Right ventricle myocardium superior (tissue), 1 donor: ENCODE measurements at regions of chr2 and their contacts with region 1.

Region 1: GRCh38 chr2:239311132-239312040 is 89.4 kb downstream of the HDAC4 start:
- DNase-seq: peak; percentile 70
- ATAC-seq: peak; percentile 52

Region 2: GRCh38 chr2:239239607-239240413 is 71.6 kb before region 1 on chr2:
- intact Hi-C with region 1: no loop called
- DNase-seq: peak; percentile 73
- ATAC-seq: peak; percentile 71

Region 3: GRCh38 chr2:239393388-239394340 is 82.3 kb after region 1 on chr2:
- intact Hi-C with region 1: loop called (anchors 5 kb)
- DNase-seq: peak; percentile 88
- ATAC-seq: peak; percentile 25

Region 4: DNA sequence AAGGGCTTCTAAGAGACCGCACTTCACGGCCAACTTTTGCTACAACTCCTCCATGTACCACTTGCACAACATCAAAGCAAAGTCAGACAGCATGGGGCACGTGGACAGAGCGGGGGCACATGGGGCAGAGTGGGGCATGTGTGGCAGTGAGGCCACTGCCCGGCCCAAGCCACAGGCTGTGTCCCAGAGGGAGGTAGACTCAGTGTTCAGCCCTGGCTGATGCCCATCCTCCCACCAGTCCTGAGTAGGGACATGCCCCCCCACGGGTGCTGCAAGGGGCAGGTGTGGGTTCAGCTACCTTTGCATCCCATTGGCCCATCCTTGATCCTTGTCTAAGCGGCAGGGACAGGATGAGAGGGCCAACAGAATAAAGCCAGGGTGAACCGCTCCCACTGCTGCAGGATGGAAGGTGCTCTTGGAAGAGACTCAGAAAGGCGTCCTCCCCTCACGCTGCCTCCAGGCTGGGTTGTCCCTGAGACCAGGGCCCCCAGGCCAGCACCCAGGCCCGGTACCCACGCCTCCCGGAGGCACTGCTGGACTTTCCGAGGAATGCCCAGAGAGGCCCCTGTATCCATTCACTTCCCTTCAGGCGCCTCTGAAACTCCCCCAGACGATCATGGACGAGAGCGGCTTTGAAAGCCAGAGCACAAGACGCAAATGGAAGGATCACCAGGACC is 495.5 kb after region 1 on chr2:
- intact Hi-C with region 1: no loop called
- DNase-seq: no peak
- ATAC-seq: no peak